ENCODE measurements at regions of chr14 and their contacts with region 1.

Region 1: DNA sequence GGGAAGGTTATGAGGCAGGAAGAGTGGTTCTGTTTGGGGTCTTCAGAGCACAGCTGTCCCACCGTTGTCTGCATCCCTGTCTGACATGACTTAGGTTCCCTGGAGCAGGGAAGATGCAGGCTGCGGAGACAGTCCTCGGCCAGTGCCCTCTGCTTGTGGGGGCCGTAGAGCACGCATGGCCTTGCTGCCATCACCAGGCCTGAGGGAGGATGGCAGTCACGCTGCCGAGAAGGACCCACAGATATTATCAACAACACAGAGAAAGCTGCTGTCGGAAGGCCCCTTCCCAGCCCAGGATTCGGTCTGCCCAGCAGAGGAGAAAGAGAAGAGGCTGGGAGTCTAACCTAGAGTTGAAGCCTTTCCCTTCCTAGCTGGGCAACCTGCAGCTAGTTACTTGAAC is 35.0 kb downstream of the ERH start:
- DNase-seq: peak; percentile 63
- ATAC-seq: peak; percentile 99
- H3K4me3 Mint-ChIP-seq: no peak overlapping the region
- H3K27ac Mint-ChIP-seq: no peak overlapping the region; the same call in 1 of the 2 replicates
- H3K4me1 Mint-ChIP-seq: no peaks in the 10 kb centered on the region
- H3K27me3 Mint-ChIP-seq: no peaks in the 10 kb centered on the region
- CTCF ChIP-seq: no peak

Region 2: GRCh38 chr14:69242311-69243224 is 120.5 kb before region 1 on chr14:
- CTCF ChIA-PET with region 1: interaction called, 27 read pairs
- POLR2A ChIA-PET with region 1: no interaction called
- DNase-seq: peak; percentile 67
- ATAC-seq: peak; percentile 80
- H3K4me3 Mint-ChIP-seq: no peak overlapping the region
- H3K27ac Mint-ChIP-seq: no peak overlapping the region
- H3K4me1 Mint-ChIP-seq: peaks cover 6% of the 10 kb centered on the region
- H3K27me3 Mint-ChIP-seq: no peaks in the 10 kb centered on the region
- CTCF ChIP-seq: peak; percentile 73

Region 3: GRCh38 chr14:69260861-69261564 is 102.0 kb before region 1 on chr14:
- CTCF ChIA-PET with region 1: interaction called, 35 read pairs
- POLR2A ChIA-PET with region 1: no interaction called
- DNase-seq: peak; percentile 73
- ATAC-seq: peak; percentile 43
- H3K4me3 Mint-ChIP-seq: peak overlapping the region; percentile 79
- H3K27ac Mint-ChIP-seq: no peak overlapping the region
- H3K4me1 Mint-ChIP-seq: peaks cover 21% of the 10 kb centered on the region
- H3K27me3 Mint-ChIP-seq: peaks cover 57% of the 10 kb centered on the region
- CTCF ChIP-seq: peak; percentile 82

Region 4: GRCh38 chr14:69335371-69335771 is 27.7 kb before region 1 on chr14:
- CTCF ChIA-PET with region 1: no interaction called
- POLR2A ChIA-PET with region 1: no interaction called
- DNase-seq: no peak
- ATAC-seq: no peak
- H3K4me3 Mint-ChIP-seq: no peak overlapping the region
- H3K27ac Mint-ChIP-seq: no peak overlapping the region
- H3K4me1 Mint-ChIP-seq: no peaks in the 10 kb centered on the region
- H3K27me3 Mint-ChIP-seq: no peaks in the 10 kb centered on the region
- CTCF ChIP-seq: no peak

Region 5: DNA sequence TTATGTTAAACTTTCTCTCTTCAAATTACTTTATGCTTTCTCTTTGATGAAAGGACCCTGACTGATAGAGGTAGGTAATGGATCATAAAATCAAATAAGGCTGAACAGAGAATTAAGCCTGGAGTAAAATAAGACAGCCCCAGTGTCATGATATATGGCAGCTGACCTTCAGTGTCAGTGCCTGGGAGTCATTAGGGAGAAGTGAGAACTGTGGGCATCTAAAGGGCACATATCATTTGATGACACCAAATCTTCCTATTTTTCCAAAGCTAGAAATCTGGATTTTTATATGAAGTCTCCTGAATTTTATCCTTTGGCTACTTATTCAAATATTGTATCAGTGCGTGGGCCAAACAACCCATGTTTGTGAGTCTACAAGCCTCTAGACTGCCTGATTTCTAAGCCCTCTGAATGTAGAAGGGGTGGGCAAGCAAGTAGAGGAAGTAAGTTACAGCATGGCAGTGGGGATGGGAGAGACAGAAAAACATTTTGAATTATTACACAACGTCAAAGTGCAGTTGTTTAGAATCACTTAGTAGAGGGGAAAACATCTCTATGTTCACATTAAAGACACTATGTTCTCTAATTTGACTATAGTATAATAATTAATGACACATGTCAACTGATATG is 45.4 kb after region 1 on chr14:
- CTCF ChIA-PET with region 1: no interaction called
- POLR2A ChIA-PET with region 1: no interaction called
- DNase-seq: no peak
- ATAC-seq: no peak
- H3K4me3 Mint-ChIP-seq: no peak overlapping the region
- H3K27ac Mint-ChIP-seq: no peak overlapping the region
- H3K4me1 Mint-ChIP-seq: no peaks in the 10 kb centered on the region
- H3K27me3 Mint-ChIP-seq: no peaks in the 10 kb centered on the region
- CTCF ChIP-seq: no peak

Measured in WTC11 (cell line).